ENCODE measurements at regions of chr1 and their contacts with region 1.

Region 1: DNA sequence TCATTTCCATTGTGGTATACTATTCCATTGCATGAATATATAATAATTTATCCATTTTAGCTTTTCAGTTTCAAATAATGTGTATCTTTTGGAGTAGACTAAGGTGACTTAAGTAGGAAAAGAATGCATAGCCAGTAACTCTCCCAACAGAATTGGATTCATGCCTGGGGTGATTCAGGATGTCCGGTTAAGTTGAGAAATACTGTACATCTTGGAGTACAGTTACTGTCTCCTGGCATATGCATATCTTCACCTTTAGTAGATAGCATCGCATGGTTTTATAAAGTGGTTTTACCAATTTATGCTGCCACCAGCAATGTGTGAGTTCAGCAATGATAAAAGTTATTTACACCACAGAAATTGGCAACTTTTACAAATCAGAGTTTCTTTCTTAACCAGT is 18.6 kb upstream of the SLC6A9 start:
- DNase-seq: no peak
- H3K4me3 Mint-ChIP-seq: no peak overlapping the region
- H3K27ac Mint-ChIP-seq: no peak overlapping the region
- H3K4me1 Mint-ChIP-seq: peaks cover 18% of the 10 kb centered on the region
- H3K27me3 Mint-ChIP-seq: peaks cover 6% of the 10 kb centered on the region

Region 2: DNA sequence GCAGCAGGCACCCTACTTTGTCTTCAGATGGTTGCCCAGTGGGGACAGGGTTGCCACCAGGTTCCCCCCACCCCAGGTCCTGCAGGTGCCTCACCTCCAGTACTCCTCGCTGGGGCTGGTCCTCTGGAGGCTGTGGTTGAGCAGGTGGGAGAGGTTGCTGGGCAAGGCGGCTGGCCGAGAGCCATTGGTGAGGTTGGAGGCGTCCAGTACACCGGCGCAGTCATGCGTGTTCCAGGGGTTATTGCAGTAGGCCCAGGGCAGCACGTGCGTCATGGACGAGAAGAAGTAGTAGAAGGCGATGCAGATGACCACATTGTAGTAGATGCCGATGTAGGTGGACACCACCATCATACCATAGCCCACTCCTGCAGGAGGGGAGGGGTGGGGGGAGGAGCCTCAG is 41.6 kb before region 1 on chr1:
- CTCF ChIA-PET with region 1: interaction called, 61 read pairs
- POLR2A ChIA-PET with region 1: no interaction called
- DNase-seq: no peak
- H3K4me3 Mint-ChIP-seq: no peak overlapping the region
- H3K27ac Mint-ChIP-seq: no peak overlapping the region
- H3K4me1 Mint-ChIP-seq: no peaks in the 10 kb centered on the region
- H3K27me3 Mint-ChIP-seq: no peaks in the 10 kb centered on the region

Region 3: GRCh38 chr1:44029906-44030604 is 19.8 kb before region 1 on chr1:
- CTCF ChIA-PET with region 1: interaction called, 52 read pairs
- POLR2A ChIA-PET with region 1: no interaction called
- DNase-seq: peak; percentile 90
- H3K4me3 Mint-ChIP-seq: peak overlapping the region; percentile 95
- H3K27ac Mint-ChIP-seq: peak overlapping the region; percentile 94
- H3K4me1 Mint-ChIP-seq: peaks cover 32% of the 10 kb centered on the region
- H3K27me3 Mint-ChIP-seq: no peaks in the 10 kb centered on the region

Region 4: DNA sequence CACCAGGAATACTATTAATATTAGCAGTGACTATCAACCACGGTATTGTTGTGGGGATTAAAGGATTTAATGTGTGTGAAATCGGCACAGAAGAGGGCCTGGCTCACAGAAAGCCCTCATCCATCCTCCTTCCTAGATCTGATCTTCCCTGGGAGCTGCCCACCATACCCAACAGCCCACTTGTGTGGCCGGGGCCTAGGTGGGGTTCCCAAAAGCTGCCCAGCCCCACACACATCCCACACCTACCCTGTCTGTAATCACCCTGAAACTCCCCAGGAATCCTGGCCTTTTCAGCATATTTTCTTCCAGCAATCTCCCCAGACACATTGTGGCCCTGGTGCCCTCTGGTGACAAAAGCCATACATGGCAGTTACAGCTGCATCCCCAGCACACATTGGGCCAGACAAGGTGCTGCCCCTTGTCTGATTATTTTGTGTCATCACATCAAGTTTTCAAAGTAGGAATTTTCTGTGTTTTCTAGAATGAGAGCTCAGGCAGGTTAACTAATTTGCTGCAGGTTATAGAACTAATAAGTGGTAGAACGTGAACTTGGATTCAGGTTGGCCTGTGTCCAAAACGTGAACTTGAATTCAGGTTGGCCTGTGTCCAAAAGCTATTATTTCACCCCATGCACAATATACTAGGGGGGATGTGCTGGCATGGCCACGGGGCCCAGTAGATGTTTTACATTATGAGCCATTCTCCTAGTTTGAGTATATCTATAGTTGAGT is 13.3 kb before region 1 on chr1:
- CTCF ChIA-PET with region 1: interaction called, 52 read pairs
- POLR2A ChIA-PET with region 1: no interaction called
- DNase-seq: peak; percentile 71
- H3K4me3 Mint-ChIP-seq: no peak overlapping the region
- H3K27ac Mint-ChIP-seq: no peak overlapping the region
- H3K4me1 Mint-ChIP-seq: peaks cover 15% of the 10 kb centered on the region
- H3K27me3 Mint-ChIP-seq: peaks cover 7% of the 10 kb centered on the region

Region 5: GRCh38 chr1:44108971-44109370 is 59.1 kb after region 1 on chr1:
- CTCF ChIA-PET with region 1: no interaction called
- POLR2A ChIA-PET with region 1: no interaction called
- DNase-seq: no peak
- H3K4me3 Mint-ChIP-seq: no peak overlapping the region
- H3K27ac Mint-ChIP-seq: no peak overlapping the region
- H3K4me1 Mint-ChIP-seq: no peaks in the 10 kb centered on the region
- H3K27me3 Mint-ChIP-seq: peaks cover 26% of the 10 kb centered on the region